ENCODE measurements at regions of chr6 and their contacts with region 1.

Region 1: GRCh38 chr6:152948150-152948768 is 34.6 kb downstream of the FBXO5 start:
- DNase-seq: no peak
- H3K4me3 ChIP-seq: no peak overlapping the region
- CTCF ChIP-seq: peak; percentile 44

Region 2: GRCh38 chr6:152750694-152751093 is 197.6 kb before region 1 on chr6 and contains the start of gene VIP:
- CTCF ChIA-PET with region 1: interaction called, 120 read pairs
- POLR2A ChIA-PET with region 1: no interaction called
- DNase-seq: no peak
- H3K4me3 ChIP-seq: no peak within 1 kb of the TSS
- CTCF ChIP-seq: no peak

Region 3: DNA sequence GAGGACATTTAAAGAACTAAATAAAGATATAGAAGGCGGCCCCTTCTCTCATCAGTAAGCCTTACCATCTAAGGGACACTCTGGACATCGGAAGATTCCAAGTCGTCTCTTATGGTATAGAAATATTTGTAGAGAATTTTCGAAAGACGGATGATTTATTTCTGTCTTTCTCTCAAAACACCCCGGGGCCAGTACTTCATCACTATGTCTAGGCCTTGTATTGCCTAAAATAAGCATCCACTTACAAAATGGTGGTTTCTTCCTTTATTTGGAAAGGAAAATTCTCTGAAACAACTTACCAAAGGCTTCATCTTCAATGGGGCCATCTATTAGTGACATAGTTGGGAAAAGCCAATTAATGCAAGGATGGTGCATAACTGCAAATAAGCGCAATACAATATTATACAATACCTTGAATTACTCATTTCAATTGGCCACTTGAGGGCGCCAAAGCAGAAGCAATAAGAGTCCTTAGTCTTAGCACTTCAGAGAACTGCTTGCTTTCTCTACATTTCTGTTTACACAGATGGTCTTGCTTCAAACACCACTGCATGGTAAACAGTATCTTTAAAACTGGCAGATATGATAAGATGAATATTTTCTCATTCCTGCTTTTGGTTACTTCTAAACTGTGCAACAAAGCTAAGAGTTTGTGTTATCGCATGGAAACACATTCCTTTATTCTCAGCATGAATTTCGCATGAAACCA is 84.5 kb before region 1 on chr6:
- CTCF ChIA-PET with region 1: interaction called, 90 read pairs
- POLR2A ChIA-PET with region 1: no interaction called
- DNase-seq: peak; percentile 26
- H3K4me3 ChIP-seq: no peak overlapping the region
- CTCF ChIP-seq: peak; percentile 64

Region 4: GRCh38 chr6:152897799-152898399 is 50.4 kb before region 1 on chr6:
- CTCF ChIA-PET with region 1: interaction called, 13 read pairs
- POLR2A ChIA-PET with region 1: no interaction called
- DNase-seq: no peak
- H3K4me3 ChIP-seq: no peak overlapping the region
- CTCF ChIP-seq: peak; percentile 95

Region 5: GRCh38 chr6:152922706-152923105 is 25.6 kb before region 1 on chr6:
- CTCF ChIA-PET with region 1: interaction called, 10 read pairs
- POLR2A ChIA-PET with region 1: no interaction called
- DNase-seq: no peak
- H3K4me3 ChIP-seq: no peak overlapping the region
- CTCF ChIP-seq: no peak

Region 6: DNA sequence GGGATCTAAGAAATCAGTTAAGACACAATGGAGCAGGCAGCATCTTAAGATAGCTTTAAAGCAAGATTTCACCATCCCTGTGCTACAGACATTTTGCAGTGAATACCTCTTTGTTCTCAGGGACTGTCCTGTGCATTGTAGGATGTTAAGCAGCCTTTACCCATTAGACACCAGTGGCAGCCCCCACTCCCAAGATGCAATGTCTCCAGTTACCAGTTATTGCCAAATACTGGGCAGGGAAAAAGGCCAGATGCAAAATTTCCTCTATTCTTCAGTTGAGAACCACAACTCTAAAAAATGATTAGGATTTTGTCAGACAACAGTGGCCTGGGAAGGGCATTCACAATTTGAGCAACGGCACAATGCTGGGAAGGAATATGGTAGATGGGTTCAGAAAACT is 28.5 kb after region 1 on chr6:
- CTCF ChIA-PET with region 1: interaction called, 11 read pairs
- POLR2A ChIA-PET with region 1: no interaction called
- DNase-seq: no peak
- H3K4me3 ChIP-seq: no peak overlapping the region
- CTCF ChIP-seq: no peak

Measured in AG04449 (cell line).